ENCODE measurements at regions of chr7 and their contacts with region 1.

Region 1: DNA sequence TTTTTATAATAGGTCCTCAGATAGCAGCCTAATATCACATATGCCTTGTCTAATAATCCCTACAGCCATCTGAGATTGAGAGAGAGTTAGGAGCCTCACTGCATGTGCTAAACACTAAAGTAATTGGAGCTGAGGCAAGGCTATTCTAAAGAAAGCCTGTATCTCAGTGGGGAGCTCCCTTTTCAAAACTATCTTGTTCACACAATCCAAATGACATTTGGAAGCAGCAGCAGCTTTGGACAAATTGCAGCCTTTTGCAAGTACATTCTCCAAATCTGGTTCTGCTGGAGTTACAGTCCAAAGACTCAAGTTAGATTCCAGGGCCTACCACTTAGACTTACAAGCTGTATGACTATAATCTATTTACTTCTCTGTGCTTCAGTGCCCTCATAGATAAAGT is 104.5 kb downstream of the MACC1 start:
- DNase-seq: no peak
- ATAC-seq: no peak
- H3K4me3 ChIP-seq: no peak overlapping the region
- H3K4me3 Mint-ChIP-seq: no peak overlapping the region
- H3K27ac ChIP-seq: no peak overlapping the region
- H3K27ac Mint-ChIP-seq: no peak overlapping the region
- H3K4me1 ChIP-seq: no peaks in the 10 kb centered on the region
- H3K4me1 Mint-ChIP-seq: peaks cover 3 to 8% (median 3%) of the 10 kb centered on the region in 3 donors
- H3K27me3 ChIP-seq: no peaks in the 10 kb centered on the region
- H3K27me3 Mint-ChIP-seq: no peaks in the 10 kb centered on the region

Region 2: GRCh38 chr7:20494566-20494965 is 381.9 kb after region 1 on chr7:
- CTCF ChIA-PET with region 1: no interaction called
- POLR2A ChIA-PET with region 1: interaction called in 1 of 2 experiments, 11 read pairs
- DNase-seq: no peak
- ATAC-seq: no peak
- H3K4me3 ChIP-seq: no peak overlapping the region
- H3K4me3 Mint-ChIP-seq: no peak overlapping the region
- H3K27ac ChIP-seq: no peak overlapping the region
- H3K27ac Mint-ChIP-seq: no peak overlapping the region
- H3K4me1 ChIP-seq: no peaks in the 10 kb centered on the region
- H3K4me1 Mint-ChIP-seq: no peaks in the 10 kb centered on the region
- H3K27me3 ChIP-seq: no peaks in the 10 kb centered on the region
- H3K27me3 Mint-ChIP-seq: no peaks in the 10 kb centered on the region

Measured in T-cell (primary cell).